Gastrocnemius medialis (tissue), 4 donors: ENCODE measurements at regions of chr20 and their contacts with region 1.

Region 1: DNA sequence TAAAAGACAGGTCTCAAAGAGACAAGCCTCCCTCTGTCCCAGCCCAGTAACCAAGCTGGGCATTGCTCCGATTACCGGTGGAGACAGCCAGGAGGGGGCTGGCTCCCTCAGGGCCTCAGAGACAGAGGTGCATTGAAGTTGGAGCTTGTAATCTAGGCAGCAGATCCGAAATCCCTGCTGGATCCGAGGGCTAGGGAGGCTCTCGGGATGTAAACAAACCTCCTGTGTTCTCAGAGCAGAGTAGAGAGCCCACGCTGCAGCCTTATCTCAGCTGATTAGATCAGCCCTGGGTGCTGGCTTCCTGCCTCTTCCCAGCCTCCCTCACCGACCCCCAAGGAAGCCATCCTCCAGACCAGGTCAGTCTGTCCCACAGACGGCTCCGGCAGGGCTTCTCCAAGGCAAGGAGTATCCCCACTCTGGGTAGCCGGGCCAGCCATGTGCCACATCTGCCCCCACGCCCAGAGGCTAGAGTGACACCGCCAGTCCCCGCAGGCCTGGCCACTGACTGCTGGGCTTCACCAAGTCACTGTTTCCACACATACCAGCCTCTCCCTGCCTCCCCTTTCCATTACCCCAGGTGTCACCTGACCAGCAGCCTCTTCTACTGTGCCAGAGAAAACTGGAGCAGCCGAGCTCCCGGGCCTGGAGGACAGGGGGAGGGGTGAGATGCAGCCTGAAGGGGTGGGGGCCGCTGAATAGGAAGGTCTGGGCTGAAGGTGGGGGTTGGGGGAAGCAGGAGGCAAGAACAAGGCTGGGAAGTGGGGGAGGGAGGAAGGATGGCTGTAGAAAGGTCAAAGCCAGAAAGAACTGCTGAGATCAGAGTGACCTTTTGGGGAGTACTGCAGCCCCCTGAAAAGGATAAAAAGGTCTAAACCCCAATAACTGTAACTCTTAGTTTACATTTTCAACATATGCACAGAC is 6.0 kb downstream of the SDC4 start:
- DNase-seq: peak; percentile 89 to 96
- ATAC-seq: peak; percentile 42 to 50
- H3K4me3 ChIP-seq: peak overlapping the region; percentile 48 to 97 (median 75)
- H3K27ac ChIP-seq: peak overlapping the region; percentile 90 to 100 (median 98)
- H3K4me1 ChIP-seq: peaks cover 78 to 94% of the 10 kb centered on the region in 2 donors
- H3K27me3 ChIP-seq: no peaks in the 10 kb centered on the region
- CTCF ChIP-seq: no peak
- POLR2A ChIP-seq: peak; percentile 88 to 91

Region 2: DNA sequence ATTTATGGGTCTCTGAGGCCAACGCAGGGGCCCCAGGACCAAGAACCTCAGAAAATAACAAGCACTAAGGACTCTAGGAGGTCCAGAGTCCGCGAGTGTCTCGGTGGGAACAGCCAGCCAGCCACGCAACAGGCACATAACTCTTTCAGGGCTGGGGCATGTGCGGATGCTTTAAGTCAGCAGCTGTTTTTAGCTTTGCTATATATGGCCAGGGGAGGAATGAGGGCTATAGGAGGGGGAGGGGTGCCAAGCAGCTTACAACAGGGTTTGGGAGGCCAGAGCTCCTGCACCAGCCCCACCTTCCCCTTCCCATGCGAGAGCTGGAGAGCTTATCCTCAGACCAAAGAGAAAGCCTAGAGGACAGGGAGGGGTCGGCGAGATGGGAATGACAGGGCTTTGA is 1161.4 kb before region 1 on chr20:
- in situ Hi-C with region 1: loop called in 1 of 4 experiments (anchors 25 kb)
- intact Hi-C with region 1: loop called (anchors 5 kb)
- DNase-seq: peak; percentile 80 to 95
- ATAC-seq: peak; percentile 59 to 72
- H3K4me3 ChIP-seq: peak overlapping the region; percentile 17 to 74 (median 30)
- H3K27ac ChIP-seq: peak overlapping the region; percentile 92 to 98 (median 96)
- H3K4me1 ChIP-seq: peaks cover 78 to 91% of the 10 kb centered on the region in 2 donors
- H3K27me3 ChIP-seq: no peaks in the 10 kb centered on the region
- CTCF ChIP-seq: no peak
- POLR2A ChIP-seq: peak; percentile 67 to 72

Region 3: DNA sequence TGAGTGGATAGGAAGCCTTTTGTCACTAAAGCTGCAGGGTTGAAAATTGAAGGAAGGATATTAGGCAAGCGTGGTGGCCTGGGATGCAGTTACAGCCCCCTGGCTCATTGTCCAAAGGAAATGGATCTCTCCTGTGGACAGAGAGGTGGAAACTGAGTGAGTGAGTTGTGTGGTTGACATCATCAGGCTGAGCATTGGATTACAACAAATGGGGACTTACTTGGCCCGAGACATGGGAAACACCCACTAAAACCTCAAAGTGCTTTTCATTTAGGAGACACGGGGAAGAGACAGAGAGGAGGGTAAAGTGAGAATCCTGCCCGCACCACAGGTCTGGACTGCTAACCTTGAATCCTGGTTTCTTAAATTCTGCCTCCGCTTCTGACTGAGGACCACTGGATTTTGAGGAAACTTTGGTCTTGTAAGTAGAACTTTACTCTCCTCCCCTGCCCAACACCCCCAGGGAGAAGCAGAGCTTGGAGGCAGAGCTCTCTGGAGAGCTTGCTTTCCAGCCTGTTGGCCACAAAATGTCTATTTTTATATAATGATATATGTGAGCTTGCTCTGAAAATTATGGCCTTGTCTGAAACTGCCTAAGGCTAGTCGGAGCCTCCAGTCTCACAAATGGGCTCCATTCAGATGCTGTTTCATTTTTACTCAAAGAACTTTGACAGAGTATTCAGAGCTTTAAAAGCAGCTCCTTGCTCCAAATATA is 759.7 kb before region 1 on chr20 and contains the start of gene PKIG:
- in situ Hi-C with region 1: no loop called
- intact Hi-C with region 1: loop called (anchors 5 kb)
- DNase-seq: peak; percentile 89 to 92
- ATAC-seq: peak; percentile 88
- H3K4me3 ChIP-seq: peak within 1 kb of the TSS; percentile 65 to 76 (median 74)
- H3K27ac ChIP-seq: peak within 1 kb of the TSS; percentile 95 to 98 (median 98)
- H3K4me1 ChIP-seq: peaks cover 71 to 79% of the 10 kb centered on the region in 2 donors
- H3K27me3 ChIP-seq: no peaks in the 10 kb centered on the region
- CTCF ChIP-seq: no peak
- POLR2A ChIP-seq: peak; percentile 89 to 97
- total RNA-seq, gene PKIG: 72.9 to 153 (median 100) TPM

Region 4: GRCh38 chr20:45269754-45270270 is 72.4 kb before region 1 on chr20:
- in situ Hi-C with region 1: no loop called
- intact Hi-C with region 1: no loop called
- DNase-seq: no peak
- ATAC-seq: no peak
- H3K4me3 ChIP-seq: no peak overlapping the region
- H3K27ac ChIP-seq: no peak overlapping the region
- H3K4me1 ChIP-seq: no peaks in the 10 kb centered on the region
- H3K27me3 ChIP-seq: peaks cover 0 to 4% (median 0%) of the 10 kb centered on the region in 3 donors
- CTCF ChIP-seq: no peak
- POLR2A ChIP-seq: no peak

Region 5: DNA sequence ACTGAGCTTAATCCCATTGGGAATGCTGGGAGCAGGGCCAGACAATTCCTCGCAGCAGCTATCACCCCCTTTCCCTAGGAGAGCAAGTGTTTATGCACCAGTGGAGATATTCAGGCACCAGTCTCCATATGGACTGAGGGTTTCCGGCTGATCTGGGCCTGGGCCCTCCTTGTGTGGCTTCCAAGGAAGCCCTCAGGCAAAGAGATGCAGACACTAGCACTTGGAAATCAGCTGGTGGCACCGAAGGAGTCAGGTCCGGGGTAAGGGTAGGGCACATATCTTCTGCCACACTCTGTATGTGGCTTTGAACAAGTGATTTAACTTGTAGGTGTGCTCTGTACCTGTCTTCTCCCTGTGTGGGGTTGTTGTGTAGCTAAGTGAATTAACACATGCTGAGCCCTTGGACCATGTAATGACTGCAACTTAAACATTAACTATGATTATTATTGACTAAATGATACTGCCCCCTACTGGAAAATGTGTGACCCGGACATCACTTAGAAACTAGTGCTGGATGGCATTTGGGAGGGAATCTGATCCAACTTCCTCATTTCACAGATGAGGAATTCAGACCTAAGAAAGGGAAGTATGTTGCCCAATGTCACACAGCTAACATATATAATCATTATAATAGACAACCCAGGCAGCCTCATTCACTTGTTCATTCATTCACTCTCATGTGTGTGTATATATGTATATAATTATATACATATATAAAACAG is 108.1 kb after region 1 on chr20:
- in situ Hi-C with region 1: no loop called
- intact Hi-C with region 1: no loop called
- DNase-seq: no peak
- ATAC-seq: peak in 1 of 2 donors; percentile 53
- H3K4me3 ChIP-seq: no peak overlapping the region
- H3K27ac ChIP-seq: peak overlapping the region in 3 of 4 donors; percentile 31 to 64 (median 32)
- H3K4me1 ChIP-seq: peaks cover 0 to 15% of the 10 kb centered on the region in 2 donors
- H3K27me3 ChIP-seq: peaks cover 0 to 3% (median 0%) of the 10 kb centered on the region in 3 donors
- CTCF ChIP-seq: peak; percentile 15 to 59 (median 39)
- POLR2A ChIP-seq: no peak